IMR-90 (cell line): ENCODE measurements at regions of chr3 and their contacts with region 1.

Region 1: DNA sequence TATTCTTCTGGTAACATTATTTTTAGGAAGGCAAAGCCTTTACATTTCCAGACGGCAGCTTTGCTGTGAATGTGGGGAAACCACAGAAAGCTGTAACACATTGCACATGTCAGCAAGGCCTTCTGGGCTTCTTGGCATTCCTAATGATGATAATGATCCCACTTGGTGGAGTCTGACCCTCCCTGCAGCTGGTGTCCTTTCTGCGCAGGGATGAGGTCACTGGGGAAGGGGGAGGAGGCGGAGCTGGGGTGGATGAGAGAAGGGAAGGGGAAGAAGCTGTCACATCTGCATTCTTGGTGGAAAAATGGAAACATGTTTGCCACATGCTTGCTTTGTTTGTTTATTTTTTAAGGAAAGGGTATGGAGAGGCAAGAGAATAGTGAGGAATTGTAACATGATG is 68.6 kb downstream of the FILIP1L start:
- DNase-seq: peak; percentile 99
- ATAC-seq: peak; percentile 69
- H3K4me3 ChIP-seq: no peak overlapping the region
- H3K27ac ChIP-seq: 0 out of 2 replicates have a peak overlapping the region, but pooled peaks have one; percentile 1
- H3K4me1 ChIP-seq: peaks cover 24% of the 10 kb centered on the region
- H3K27me3 ChIP-seq: peaks cover 4% of the 10 kb centered on the region; the same call in 1 of the 2 replicates
- CTCF ChIP-seq: no peak
- POLR2A ChIP-seq: no peak
- RAD21 ChIP-seq: peak; percentile 14

Region 2: DNA sequence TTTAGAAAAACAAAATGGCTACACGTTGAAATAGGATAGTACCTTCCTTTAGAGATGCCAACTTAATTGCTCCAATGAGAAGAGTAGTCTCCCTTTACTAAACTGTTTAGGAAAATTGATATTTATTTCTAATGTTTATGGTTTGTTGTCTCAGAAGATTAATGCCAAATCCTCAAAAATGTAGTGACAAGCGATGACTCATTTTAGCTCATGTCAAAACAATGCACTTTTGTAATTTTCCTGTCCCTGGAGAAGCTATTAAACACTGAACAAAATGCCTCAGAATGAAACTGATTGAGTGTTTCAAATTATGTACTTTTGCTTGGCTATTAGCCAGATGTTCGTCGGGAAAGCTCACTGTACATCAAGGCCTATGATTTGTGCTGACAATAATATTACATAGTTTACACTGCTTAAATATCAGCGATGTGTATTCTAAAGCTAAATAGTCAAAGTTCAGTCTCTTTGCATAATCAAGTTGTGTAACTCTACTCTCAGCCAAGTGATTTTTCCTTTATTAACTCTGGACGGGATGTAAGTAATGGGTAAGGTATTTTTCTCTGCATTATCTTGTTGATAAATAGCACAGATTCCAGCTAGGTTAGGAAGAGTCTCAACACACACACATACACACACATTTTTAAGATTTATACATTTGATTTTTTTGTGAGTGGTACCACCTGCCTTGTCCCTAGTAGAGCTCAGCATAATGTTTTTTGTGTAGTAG is 144.3 kb before region 1 on chr3:
- CTCF ChIA-PET with region 1: interaction called, 4 read pairs
- POLR2A ChIA-PET with region 1: no interaction called
- dilution Hi-C with region 1: no loop called
- in situ Hi-C with region 1: no loop called
- intact Hi-C with region 1: loop called (anchors 1 kb)
- DNase-seq: peak; percentile 77
- ATAC-seq: peak; percentile 73
- H3K4me3 ChIP-seq: peak overlapping the region; percentile 5; the same call in 1 of the 2 replicates
- H3K27ac ChIP-seq: no peak overlapping the region; the same call in 1 of the 2 replicates
- H3K4me1 ChIP-seq: peaks cover 8% of the 10 kb centered on the region
- H3K27me3 ChIP-seq: no peaks in the 10 kb centered on the region
- CTCF ChIP-seq: no peak
- POLR2A ChIP-seq: no peak
- RAD21 ChIP-seq: no peak

Region 3: DNA sequence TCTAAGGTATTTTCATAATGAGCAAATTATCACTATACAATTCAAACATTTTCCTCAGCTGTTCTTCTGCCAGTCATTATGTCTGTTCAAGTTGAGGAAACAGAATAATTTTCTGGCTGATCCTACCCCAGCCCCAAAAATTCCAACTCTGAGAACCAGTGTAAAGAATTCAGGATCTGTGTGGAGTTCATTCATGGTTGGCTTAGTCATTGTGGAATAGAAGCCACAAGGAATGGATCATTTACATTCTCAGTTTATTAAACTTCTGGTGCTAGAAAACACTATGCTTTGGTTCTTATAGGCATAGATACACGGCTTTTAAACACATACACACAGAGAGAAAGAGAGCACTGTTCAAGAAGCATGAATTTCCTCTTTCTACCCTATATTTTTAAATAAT is 93.4 kb before region 1 on chr3:
- CTCF ChIA-PET with region 1: no interaction called
- POLR2A ChIA-PET with region 1: no interaction called
- dilution Hi-C with region 1: no loop called
- in situ Hi-C with region 1: loop called (anchors 25 kb)
- intact Hi-C with region 1: loop called (anchors 5 kb)
- DNase-seq: peak; percentile 86
- ATAC-seq: peak; percentile 83
- H3K4me3 ChIP-seq: no peak overlapping the region
- H3K27ac ChIP-seq: peak overlapping the region; percentile 66; the same call in 1 of the 2 replicates
- H3K4me1 ChIP-seq: peaks cover 12% of the 10 kb centered on the region
- H3K27me3 ChIP-seq: no peaks in the 10 kb centered on the region
- CTCF ChIP-seq: no peak
- POLR2A ChIP-seq: no peak
- RAD21 ChIP-seq: no peak

Region 4: GRCh38 chr3:100113723-100114412 is 68.2 kb after region 1 on chr3:
- CTCF ChIA-PET with region 1: no interaction called
- POLR2A ChIA-PET with region 1: no interaction called
- dilution Hi-C with region 1: no loop called
- in situ Hi-C with region 1: no loop called
- intact Hi-C with region 1: no loop called
- DNase-seq: no peak
- ATAC-seq: no peak
- H3K4me3 ChIP-seq: no peak overlapping the region
- H3K27ac ChIP-seq: peak overlapping the region; percentile 26; the same call in 1 of the 2 replicates
- H3K4me1 ChIP-seq: peaks cover 5% of the 10 kb centered on the region
- H3K27me3 ChIP-seq: no peaks in the 10 kb centered on the region
- CTCF ChIP-seq: no peak
- POLR2A ChIP-seq: no peak
- RAD21 ChIP-seq: no peak

Region 5: DNA sequence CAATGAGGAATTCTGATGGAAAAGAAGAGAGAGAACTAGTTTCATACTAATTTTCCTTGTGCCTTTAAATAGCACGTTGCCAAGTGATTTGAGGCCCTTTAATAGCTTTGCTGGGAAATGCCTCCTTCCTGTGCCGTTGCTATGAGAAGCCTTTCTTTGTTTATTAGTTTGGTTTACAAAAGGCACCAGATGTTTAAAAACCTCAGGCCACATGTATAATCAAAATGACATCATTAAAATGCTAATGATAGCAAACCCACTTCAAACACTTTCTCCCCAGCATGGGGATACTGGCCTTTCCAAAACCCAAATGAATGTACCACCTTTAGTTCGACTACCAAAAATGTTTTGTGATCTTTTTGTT is 165.1 kb after region 1 on chr3:
- CTCF ChIA-PET with region 1: no interaction called
- POLR2A ChIA-PET with region 1: no interaction called
- dilution Hi-C with region 1: no loop called
- in situ Hi-C with region 1: no loop called
- intact Hi-C with region 1: loop called (anchors 2 kb)
- DNase-seq: peak; percentile 95
- ATAC-seq: peak; percentile 74
- H3K4me3 ChIP-seq: no peak overlapping the region
- H3K27ac ChIP-seq: peak overlapping the region; percentile 86; the same call in 1 of the 2 replicates
- H3K4me1 ChIP-seq: peaks cover 18% of the 10 kb centered on the region
- H3K27me3 ChIP-seq: no peaks in the 10 kb centered on the region; the same call in 1 of the 2 replicates
- CTCF ChIP-seq: no peak
- POLR2A ChIP-seq: no peak
- RAD21 ChIP-seq: no peak

Region 6: GRCh38 chr3:100590114-100590839 is 544.6 kb after region 1 on chr3:
- CTCF ChIA-PET with region 1: no interaction called
- POLR2A ChIA-PET with region 1: no interaction called
- dilution Hi-C with region 1: no loop called
- in situ Hi-C with region 1: no loop called
- intact Hi-C with region 1: no loop called
- DNase-seq: peak; percentile 76
- ATAC-seq: peak; percentile 94
- H3K4me3 ChIP-seq: no peak overlapping the region; the same call in 1 of the 2 replicates
- H3K27ac ChIP-seq: no peak overlapping the region
- H3K4me1 ChIP-seq: no peaks in the 10 kb centered on the region
- H3K27me3 ChIP-seq: no peaks in the 10 kb centered on the region
- CTCF ChIP-seq: peak; percentile 89
- POLR2A ChIP-seq: no peak; the same call in 1 of the 2 replicates
- RAD21 ChIP-seq: peak; percentile 93

Region 7: DNA sequence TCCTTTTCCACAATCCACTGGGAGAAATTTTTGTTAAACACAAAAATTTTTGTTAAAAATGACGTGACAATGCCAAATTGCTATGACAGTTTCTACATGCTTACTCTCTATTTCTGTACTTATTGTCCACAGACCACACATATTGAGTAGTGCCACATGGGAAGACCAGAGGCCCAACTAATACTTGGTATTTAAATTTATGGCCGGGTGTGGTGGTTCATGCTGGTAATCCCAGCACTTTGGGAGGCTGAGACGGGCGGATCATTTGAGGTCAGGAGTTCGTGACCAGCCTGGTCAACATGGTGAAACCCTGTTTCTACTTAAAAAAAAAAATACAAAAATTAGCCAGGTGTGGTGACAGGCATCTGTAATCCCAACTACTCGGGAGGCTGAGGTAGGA is 1611.0 kb after region 1 on chr3:
- CTCF ChIA-PET with region 1: no interaction called
- POLR2A ChIA-PET with region 1: no interaction called
- dilution Hi-C with region 1: no loop called
- in situ Hi-C with region 1: no loop called
- intact Hi-C with region 1: no loop called
- DNase-seq: no peak
- ATAC-seq: no peak
- H3K4me3 ChIP-seq: no peak overlapping the region
- H3K27ac ChIP-seq: no peak overlapping the region
- H3K4me1 ChIP-seq: no peaks in the 10 kb centered on the region
- H3K27me3 ChIP-seq: no peaks in the 10 kb centered on the region
- CTCF ChIP-seq: no peak
- POLR2A ChIP-seq: no peak
- RAD21 ChIP-seq: no peak